ENCODE measurements at regions of chr11 and their contacts with region 1.

Region 1: GRCh38 chr11:9438611-9439010 is 22.2 kb upstream of the ZNF143 start:
- DNase-seq: no peak
- ATAC-seq: no peak
- H3K4me3 ChIP-seq: no peak overlapping the region
- H3K27ac ChIP-seq: no peak overlapping the region
- H3K4me1 ChIP-seq: no peaks in the 10 kb centered on the region
- H3K27me3 ChIP-seq: no peaks in the 10 kb centered on the region
- CTCF ChIP-seq: no peak

Region 2: DNA sequence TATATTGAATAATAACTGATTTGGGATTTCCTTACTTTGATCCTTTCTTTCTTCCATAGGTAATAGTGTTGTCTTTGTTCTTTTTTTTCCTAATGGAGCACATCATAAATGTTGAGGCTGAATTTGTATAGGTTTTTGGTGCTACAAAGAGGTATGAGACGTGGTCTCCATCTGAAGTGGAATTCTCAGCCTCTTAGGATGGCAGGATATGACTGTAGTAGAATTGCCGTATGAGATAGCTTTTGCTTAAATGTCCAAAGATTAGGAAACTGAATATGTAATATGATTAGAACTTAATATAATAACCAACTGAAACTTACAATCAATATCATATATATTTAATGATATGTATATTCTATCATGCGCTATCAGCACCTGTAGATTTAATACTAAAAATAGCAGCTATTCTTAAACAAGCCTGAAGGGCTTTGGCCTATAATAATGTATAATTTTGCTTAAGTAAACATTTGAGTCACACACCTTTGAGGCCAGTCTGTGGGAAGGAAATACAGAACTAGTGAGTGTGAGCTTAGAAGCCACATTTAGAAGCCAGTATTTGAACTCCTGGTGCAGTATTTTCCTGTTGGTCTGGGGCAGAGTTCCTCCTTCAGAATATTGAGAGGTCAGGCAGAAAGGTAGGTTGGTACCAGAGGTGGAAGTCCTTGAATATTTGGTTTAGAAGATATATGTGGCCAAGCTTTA is 287.9 kb after region 1 on chr11:
- CTCF ChIA-PET with region 1: interaction called, 10 read pairs
- POLR2A ChIA-PET with region 1: no interaction called
- in situ Hi-C with region 1: no loop called
- intact Hi-C with region 1: no loop called
- DNase-seq: peak; percentile 64
- ATAC-seq: peak; percentile 82
- H3K4me3 ChIP-seq: no peak overlapping the region
- H3K27ac ChIP-seq: 0 out of 2 replicates have a peak overlapping the region, but pooled peaks have one; percentile 8
- H3K4me1 ChIP-seq: peaks cover 6% of the 10 kb centered on the region; the same call in 1 of the 2 replicates
- H3K27me3 ChIP-seq: no peaks in the 10 kb centered on the region
- CTCF ChIP-seq: no peak